ENCODE measurements at regions of chr10 and their contacts with region 1.

Region 1: GRCh38 chr10:6514844-6515780 is 65.0 kb downstream of the PRKCQ start:
- DNase-seq: no peak
- H3K4me3 ChIP-seq: no peak overlapping the region
- H3K4me3 Mint-ChIP-seq: peak overlapping the region in 1 of 8 donors; percentile 11
- H3K27ac ChIP-seq: no peak overlapping the region
- H3K27ac Mint-ChIP-seq: peak overlapping the region in 6 of 7 donors; percentile 21 to 83 (median 68)
- H3K4me1 ChIP-seq: peaks cover 78% of the 10 kb centered on the region
- H3K4me1 Mint-ChIP-seq: peaks cover 63 to 94% (median 75%) of the 10 kb centered on the region in 4 donors
- H3K27me3 ChIP-seq: no peaks in the 10 kb centered on the region
- H3K27me3 Mint-ChIP-seq: no peaks in the 10 kb centered on the region

Region 2: GRCh38 chr10:6498771-6499170 is 16.3 kb before region 1 on chr10:
- CTCF ChIA-PET with region 1: interaction called, 3 read pairs
- POLR2A ChIA-PET with region 1: interaction called, 4 read pairs
- intact Hi-C with region 1: loop called (anchors 2 kb)
- DNase-seq: peak; percentile 62 to 83 (median 74)
- H3K4me3 ChIP-seq: peak overlapping the region in 1 of 2 donors; percentile 4
- H3K4me3 Mint-ChIP-seq: peak overlapping the region in 7 of 8 donors; percentile 39 to 87 (median 75)
- H3K27ac ChIP-seq: peak overlapping the region; percentile 59
- H3K27ac Mint-ChIP-seq: peak overlapping the region in 6 of 7 donors; percentile 91 to 96 (median 95)
- H3K4me1 ChIP-seq: peaks cover 65% of the 10 kb centered on the region
- H3K4me1 Mint-ChIP-seq: peaks cover 40 to 49% (median 48%) of the 10 kb centered on the region in 4 donors
- H3K27me3 ChIP-seq: no peaks in the 10 kb centered on the region
- H3K27me3 Mint-ChIP-seq: no peaks in the 10 kb centered on the region

Region 3: DNA sequence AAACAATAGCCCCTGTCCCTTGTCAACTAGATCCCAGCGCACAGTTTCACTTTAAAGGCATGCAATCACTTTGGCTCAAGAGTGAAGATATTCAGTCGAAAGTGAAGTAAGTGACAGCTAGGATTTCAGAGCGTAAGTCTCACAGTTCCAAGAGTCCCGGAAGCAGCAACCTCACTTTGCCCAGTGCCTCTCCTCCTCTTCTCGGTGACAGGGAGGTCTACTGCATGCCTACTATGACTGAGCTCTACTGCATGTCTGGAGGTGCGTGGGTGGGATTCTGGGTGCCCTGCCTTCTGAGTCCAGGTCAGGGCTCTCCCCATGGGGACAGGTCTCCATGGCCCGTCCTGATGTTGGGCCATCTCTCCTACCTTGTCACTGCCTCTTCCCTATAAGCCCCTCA is 48.0 kb after region 1 on chr10:
- CTCF ChIA-PET with region 1: no interaction called
- POLR2A ChIA-PET with region 1: interaction called, 3 read pairs
- intact Hi-C with region 1: loop called (anchors 2 kb)
- DNase-seq: peak in 2 of 5 donors; percentile 35 to 62
- H3K4me3 ChIP-seq: peak overlapping the region in 1 of 2 donors; percentile 21
- H3K4me3 Mint-ChIP-seq: peak overlapping the region; percentile 68 to 90 (median 79)
- H3K27ac ChIP-seq: peak overlapping the region; percentile 56
- H3K27ac Mint-ChIP-seq: peak overlapping the region; percentile 85 to 94 (median 90)
- H3K4me1 ChIP-seq: peaks cover 98% of the 10 kb centered on the region
- H3K4me1 Mint-ChIP-seq: peaks cover 79 to 94% (median 88%) of the 10 kb centered on the region in 4 donors
- H3K27me3 ChIP-seq: no peaks in the 10 kb centered on the region
- H3K27me3 Mint-ChIP-seq: no peaks in the 10 kb centered on the region

Region 4: GRCh38 chr10:6601246-6601805 is 86.2 kb after region 1 on chr10:
- CTCF ChIA-PET with region 1: interaction called, 5 read pairs
- POLR2A ChIA-PET with region 1: no interaction called
- intact Hi-C with region 1: loop called (anchors 1 kb)
- DNase-seq: peak; percentile 47 to 55 (median 53)
- H3K4me3 ChIP-seq: no peak overlapping the region
- H3K4me3 Mint-ChIP-seq: peak overlapping the region in 7 of 8 donors; percentile 38 to 85 (median 77)
- H3K27ac ChIP-seq: no peak overlapping the region
- H3K27ac Mint-ChIP-seq: peak overlapping the region; percentile 63 to 92 (median 85)
- H3K4me1 ChIP-seq: peaks cover 67% of the 10 kb centered on the region
- H3K4me1 Mint-ChIP-seq: peaks cover 46 to 81% (median 63%) of the 10 kb centered on the region in 4 donors
- H3K27me3 ChIP-seq: no peaks in the 10 kb centered on the region
- H3K27me3 Mint-ChIP-seq: no peaks in the 10 kb centered on the region

Measured in CD4-positive, alpha-beta memory T cell (primary cell).